ENCODE measurements at regions of chr21 and their contacts with region 1.

Region 1: DNA sequence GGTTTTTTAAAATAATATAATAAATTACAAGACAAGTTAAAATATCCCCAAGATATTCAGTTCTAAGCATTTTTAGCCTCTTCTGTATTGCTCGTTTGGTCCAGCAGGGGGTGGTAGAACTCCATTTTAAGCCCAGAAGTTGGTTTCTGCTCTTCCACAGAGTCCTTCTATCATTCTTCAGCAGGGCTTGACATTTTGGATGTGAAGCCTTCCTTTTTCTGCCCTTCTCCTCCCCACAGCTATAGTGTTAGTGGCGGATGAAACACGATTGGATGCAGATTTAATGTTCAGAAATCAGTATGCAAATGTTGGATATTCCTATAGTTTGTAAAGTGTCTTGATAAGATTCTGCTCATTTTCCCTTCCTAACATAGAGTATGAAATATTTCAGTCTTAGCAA is 1.4 kb downstream of the NCAM2 start:
- DNase-seq: peak; percentile 72
- ATAC-seq: peak; percentile 30; the same call in 1 of the 2 replicates
- H3K4me3 ChIP-seq: no peak overlapping the region; the same call in 1 of the 2 replicates
- H3K27ac ChIP-seq: no peak overlapping the region
- H3K4me1 ChIP-seq: no peaks in the 10 kb centered on the region; the same call in 1 of the 2 replicates
- H3K27me3 ChIP-seq: peaks cover 5% of the 10 kb centered on the region; the same call in 1 of the 2 replicates
- CTCF ChIP-seq: peak; percentile 84

Region 2: GRCh38 chr21:20802631-20803260 is 196.9 kb before region 1 on chr21:
- CTCF ChIA-PET with region 1: no interaction called
- POLR2A ChIA-PET with region 1: no interaction called
- intact Hi-C with region 1: no loop called
- DNase-seq: no peak
- ATAC-seq: no peak
- H3K4me3 ChIP-seq: no peak overlapping the region
- H3K27ac ChIP-seq: no peak overlapping the region
- H3K4me1 ChIP-seq: no peaks in the 10 kb centered on the region
- H3K27me3 ChIP-seq: no peaks in the 10 kb centered on the region
- CTCF ChIP-seq: no peak

Region 3: DNA sequence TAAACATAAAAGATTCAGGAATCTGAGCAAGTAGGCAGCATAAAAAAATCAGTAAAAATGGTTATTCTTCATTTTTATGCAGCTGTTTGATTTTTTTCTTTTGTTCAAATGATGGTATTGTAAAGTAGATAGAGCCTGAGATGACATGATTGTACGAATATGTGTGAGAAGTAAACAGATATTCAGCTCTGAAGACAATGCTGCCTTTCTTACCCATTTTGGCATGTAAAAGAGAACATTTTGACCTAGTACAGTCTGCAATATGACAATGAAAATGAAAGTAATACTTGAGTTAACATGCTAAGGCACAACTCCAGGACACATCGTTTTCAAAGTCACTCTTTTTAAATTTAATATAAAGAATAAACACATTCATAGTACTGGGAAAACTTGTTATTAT is 97.1 kb before region 1 on chr21:
- CTCF ChIA-PET with region 1: interaction called, 3 read pairs
- POLR2A ChIA-PET with region 1: interaction called, 11 read pairs
- intact Hi-C with region 1: no loop called
- DNase-seq: no peak
- ATAC-seq: no peak
- H3K4me3 ChIP-seq: no peak overlapping the region
- H3K27ac ChIP-seq: no peak overlapping the region
- H3K4me1 ChIP-seq: no peaks in the 10 kb centered on the region
- H3K27me3 ChIP-seq: no peaks in the 10 kb centered on the region
- CTCF ChIP-seq: no peak

Region 4: DNA sequence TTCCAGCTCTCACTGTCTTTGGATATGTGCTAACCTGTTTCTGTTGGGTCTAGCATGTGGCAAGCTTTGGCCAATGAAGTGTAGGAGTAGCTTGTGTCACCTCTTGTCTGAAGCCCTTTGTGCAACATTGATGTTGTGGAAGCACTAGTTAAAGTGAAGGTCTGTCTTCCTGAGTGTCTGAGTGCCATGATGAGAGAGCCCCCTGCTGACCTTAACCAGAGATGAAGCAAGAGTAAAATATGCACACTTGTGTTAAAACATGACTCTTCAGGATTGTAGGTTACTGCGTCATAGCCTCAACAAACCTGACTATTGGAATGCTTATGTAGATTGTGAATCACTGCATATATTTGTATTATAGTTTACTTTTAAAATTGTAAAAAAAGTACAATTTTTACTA is 102.3 kb after region 1 on chr21:
- CTCF ChIA-PET with region 1: interaction called, 3 read pairs
- POLR2A ChIA-PET with region 1: no interaction called
- intact Hi-C with region 1: loop called (anchors 1 kb)
- DNase-seq: peak; percentile 48
- ATAC-seq: peak; percentile 72
- H3K4me3 ChIP-seq: no peak overlapping the region
- H3K27ac ChIP-seq: no peak overlapping the region
- H3K4me1 ChIP-seq: no peaks in the 10 kb centered on the region
- H3K27me3 ChIP-seq: no peaks in the 10 kb centered on the region
- CTCF ChIP-seq: peak; percentile 53

Region 5: GRCh38 chr21:21232320-21232719 is 232.7 kb after region 1 on chr21:
- CTCF ChIA-PET with region 1: no interaction called
- POLR2A ChIA-PET with region 1: no interaction called
- intact Hi-C with region 1: loop called (anchors 5 kb)
- DNase-seq: peak; percentile 17
- ATAC-seq: no peak
- H3K4me3 ChIP-seq: no peak overlapping the region
- H3K27ac ChIP-seq: no peak overlapping the region
- H3K4me1 ChIP-seq: no peaks in the 10 kb centered on the region
- H3K27me3 ChIP-seq: no peaks in the 10 kb centered on the region
- CTCF ChIP-seq: peak; percentile 58

Region 6: DNA sequence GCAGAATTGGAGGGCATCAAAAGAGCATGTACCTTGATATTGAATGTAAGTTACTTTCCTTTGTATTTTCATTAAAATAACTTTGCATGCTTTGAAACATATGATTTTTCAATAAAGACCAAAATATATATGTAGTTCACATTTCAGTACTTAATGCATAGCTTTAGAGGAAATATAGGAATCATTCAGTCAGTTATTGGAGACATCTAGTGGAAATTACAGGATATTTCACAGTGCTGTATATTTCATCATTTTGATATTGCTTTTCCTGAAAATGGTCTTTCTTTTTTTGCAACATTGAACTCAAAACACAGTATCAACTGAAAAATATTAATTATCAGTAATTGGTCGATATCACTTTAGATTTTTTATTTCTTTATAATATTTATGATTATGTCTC is 374.3 kb after region 1 on chr21:
- CTCF ChIA-PET with region 1: interaction called, 3 read pairs
- POLR2A ChIA-PET with region 1: no interaction called
- intact Hi-C with region 1: loop called (anchors 1 kb)
- DNase-seq: no peak
- ATAC-seq: peak; percentile 43; the same call in 1 of the 2 replicates
- H3K4me3 ChIP-seq: no peak overlapping the region
- H3K27ac ChIP-seq: no peak overlapping the region
- H3K4me1 ChIP-seq: no peaks in the 10 kb centered on the region
- H3K27me3 ChIP-seq: no peaks in the 10 kb centered on the region
- CTCF ChIP-seq: peak; percentile 46; the same call in 1 of the 2 replicates

Region 7: DNA sequence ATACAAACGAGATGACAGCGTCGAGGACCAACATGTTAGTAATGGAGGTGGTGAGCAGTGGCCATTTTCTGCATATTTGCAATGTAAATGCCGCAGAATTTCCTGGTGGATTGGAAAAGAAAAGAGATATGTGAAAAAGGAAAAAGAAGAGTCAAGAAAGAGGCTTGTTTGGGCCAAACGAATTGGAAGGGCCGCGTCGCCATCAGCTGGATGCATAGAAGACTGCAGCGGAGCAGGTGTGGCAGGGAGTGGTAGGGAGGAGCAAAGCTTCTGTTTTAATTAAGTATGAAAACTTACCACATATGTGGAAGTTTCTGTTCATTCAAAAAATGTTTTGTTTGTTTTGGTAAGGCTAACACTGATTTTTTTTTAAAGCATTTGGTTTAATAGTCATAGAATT is 689.2 kb after region 1 on chr21:
- CTCF ChIA-PET with region 1: no interaction called
- POLR2A ChIA-PET with region 1: no interaction called
- intact Hi-C with region 1: loop called (anchors 1 kb)
- DNase-seq: peak; percentile 46
- ATAC-seq: peak; percentile 75
- H3K4me3 ChIP-seq: no peak overlapping the region
- H3K27ac ChIP-seq: no peak overlapping the region
- H3K4me1 ChIP-seq: no peaks in the 10 kb centered on the region
- H3K27me3 ChIP-seq: no peaks in the 10 kb centered on the region
- CTCF ChIP-seq: peak; percentile 67

Region 8: DNA sequence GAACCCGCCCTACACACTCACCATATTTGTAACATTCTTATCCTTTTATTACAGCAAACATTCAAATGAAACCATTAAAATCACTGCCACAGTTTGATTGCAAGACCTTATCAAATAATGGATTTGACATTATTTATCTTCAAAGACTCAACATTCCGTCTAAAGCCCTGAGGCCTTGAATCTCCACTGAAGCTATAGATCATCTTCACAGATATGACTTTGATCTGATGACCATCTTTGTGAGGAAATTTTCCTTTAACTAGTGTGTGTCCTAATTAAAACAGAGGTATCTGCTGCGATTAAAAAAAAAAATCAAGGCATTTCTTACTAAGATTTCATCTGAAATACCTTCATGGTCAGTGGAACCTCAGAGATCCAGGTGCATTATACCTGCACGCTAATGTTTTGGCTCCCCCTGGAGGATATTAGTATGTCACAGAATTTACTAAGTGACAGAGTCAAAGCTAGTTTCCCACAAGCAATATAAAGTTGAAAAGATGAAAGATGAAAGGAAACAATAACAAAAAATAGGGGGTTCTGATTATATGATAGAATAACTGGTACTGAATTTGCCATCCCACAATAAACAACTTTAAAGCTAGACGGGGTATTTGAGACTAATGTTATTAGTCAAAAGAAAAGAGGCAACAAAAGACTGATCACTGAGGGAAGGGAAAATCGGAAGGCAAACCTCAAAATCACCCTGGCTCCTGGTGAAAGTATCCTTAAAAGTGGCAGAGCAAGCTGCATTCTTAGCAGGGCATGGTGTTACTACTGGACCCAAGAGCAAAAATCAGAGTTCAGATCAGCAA is 922.0 kb after region 1 on chr21:
- CTCF ChIA-PET with region 1: no interaction called
- POLR2A ChIA-PET with region 1: no interaction called
- intact Hi-C with region 1: loop called (anchors 2 kb)
- DNase-seq: peak; percentile 65
- ATAC-seq: peak; percentile 64
- H3K4me3 ChIP-seq: peak overlapping the region; percentile 33
- H3K27ac ChIP-seq: no peak overlapping the region
- H3K4me1 ChIP-seq: no peaks in the 10 kb centered on the region
- H3K27me3 ChIP-seq: no peaks in the 10 kb centered on the region
- CTCF ChIP-seq: peak; percentile 88

Measured in PC-3 (cell line).